GM10248 (cell line): ENCODE measurements at regions of chr2 and their contacts with region 1.

Region 1: DNA sequence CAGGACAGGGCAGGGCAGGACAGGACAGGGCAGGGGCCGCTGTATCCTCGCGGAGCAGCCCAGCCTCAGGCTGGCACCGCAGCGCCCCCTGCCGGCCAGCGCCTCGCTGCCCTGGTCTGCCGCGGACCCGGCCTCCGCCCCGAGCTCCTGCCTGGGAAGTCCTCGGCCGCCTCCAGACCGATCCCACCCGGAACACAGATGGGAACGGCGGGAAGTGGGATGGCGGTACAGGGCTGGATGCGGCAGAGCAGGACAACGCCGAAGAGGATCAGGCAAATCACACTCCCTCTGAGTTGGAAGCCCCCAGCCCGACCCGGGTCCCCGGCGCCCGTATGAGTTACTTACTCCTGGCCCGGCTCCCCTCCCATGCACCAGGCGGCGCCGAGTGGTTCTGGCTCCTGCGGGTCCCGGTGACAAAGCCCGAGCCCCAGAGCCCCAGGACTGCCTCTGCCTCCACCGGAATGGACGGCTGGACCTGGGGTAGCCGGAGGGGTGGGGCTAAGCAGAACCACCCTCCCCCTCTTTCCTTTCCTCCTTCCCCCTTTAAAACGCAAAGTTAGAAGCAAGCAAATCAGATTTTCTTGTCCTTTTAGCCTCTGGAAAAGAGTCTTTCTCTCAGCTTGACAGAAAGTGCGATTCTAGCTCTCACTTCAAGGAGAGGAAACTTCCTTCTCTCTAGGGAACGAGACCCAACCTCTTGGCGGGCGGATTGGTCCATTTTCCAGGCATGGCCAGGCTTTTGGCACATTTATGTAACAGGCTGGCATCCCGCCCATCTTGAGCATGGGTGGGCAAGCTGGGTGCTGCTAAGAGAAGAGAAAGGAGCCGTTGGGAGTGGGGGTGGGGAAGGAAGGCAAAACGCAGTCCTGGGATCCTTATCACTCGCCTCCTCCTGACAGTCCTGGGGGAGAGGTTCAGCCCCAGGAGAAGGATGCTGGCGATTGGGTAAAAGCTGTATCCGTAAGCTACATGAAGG is at the start of gene TP53I3:
- DNase-seq: peak; percentile 90
- CTCF ChIP-seq: peak; percentile 96

Region 2: GRCh38 chr2:23734416-23734815 is 350.3 kb before region 1 on chr2:
- CTCF ChIA-PET with region 1: no interaction called
- POLR2A ChIA-PET with region 1: no interaction called
- DNase-seq: no peak
- CTCF ChIP-seq: no peak

Region 3: DNA sequence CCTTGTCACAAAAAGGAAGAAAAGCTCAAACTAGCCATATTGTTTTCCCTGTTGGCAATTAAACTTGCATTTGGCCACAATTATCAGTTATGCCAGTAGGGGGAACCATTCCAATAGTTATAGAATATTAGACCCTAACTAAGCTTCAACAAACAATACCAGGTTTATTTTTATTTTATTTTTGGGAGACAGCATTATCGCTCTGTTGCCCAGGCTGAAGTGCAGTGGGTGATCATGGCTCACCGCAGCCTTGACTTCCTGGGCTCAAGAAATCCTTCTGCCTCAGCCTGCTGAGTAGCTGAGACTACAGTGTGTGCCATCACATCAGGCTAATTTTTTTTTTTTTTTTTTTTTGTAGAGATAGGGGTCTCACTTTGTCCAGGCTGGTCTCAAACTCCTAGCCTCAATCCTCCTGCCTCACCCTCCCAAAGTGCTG is 259.9 kb before region 1 on chr2:
- CTCF ChIA-PET with region 1: interaction called, 44 read pairs
- POLR2A ChIA-PET with region 1: interaction called, 4 read pairs
- DNase-seq: peak; percentile 55
- CTCF ChIP-seq: peak; percentile 70

Region 4: GRCh38 chr2:23926750-23927571 is 157.7 kb before region 1 on chr2 and contains the start of gene ATAD2B:
- CTCF ChIA-PET with region 1: interaction called, 38 read pairs
- POLR2A ChIA-PET with region 1: interaction called, 10 read pairs
- DNase-seq: peak; percentile 93
- CTCF ChIP-seq: peak; percentile 93

Region 5: GRCh38 chr2:24058564-24059271 is 26.0 kb before region 1 on chr2:
- CTCF ChIA-PET with region 1: interaction called, 91 read pairs
- POLR2A ChIA-PET with region 1: no interaction called
- DNase-seq: no peak
- CTCF ChIP-seq: no peak

Region 6: GRCh38 chr2:24104054-24104650 is 19.5 kb after region 1 on chr2:
- CTCF ChIA-PET with region 1: interaction called, 12 read pairs
- POLR2A ChIA-PET with region 1: no interaction called
- DNase-seq: no peak
- CTCF ChIP-seq: no peak

Region 7: DNA sequence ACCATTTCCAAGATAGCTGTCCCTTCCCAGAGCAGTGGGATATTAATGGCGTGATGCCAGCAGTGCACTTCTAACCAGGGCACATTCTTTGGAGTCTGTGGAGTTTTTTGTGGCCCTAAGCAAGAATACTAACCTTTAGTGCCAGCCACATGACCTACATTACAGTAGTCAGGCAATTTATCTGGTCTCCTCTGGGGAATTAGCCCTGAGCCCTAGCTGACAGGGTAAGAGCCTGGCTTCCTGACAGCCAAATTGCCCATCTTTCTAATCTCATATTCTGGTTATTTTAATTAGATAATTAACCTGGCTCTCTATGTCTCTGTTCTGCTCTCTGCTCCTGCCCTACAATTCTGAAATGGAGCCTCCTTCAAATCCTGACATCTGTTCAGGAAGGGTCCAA is 33.2 kb after region 1 on chr2:
- CTCF ChIA-PET with region 1: interaction called, 14 read pairs
- POLR2A ChIA-PET with region 1: interaction called, 4 read pairs
- DNase-seq: no peak
- CTCF ChIP-seq: no peak